PC-9 (cell line): ENCODE measurements at regions of chr3 and their contacts with region 1.

Region 1: GRCh38 chr3:78712941-78713340 is 1054.9 kb downstream of the ROBO1 start:
- DNase-seq: no peak
- H3K4me3 ChIP-seq: no peak overlapping the region
- H3K27ac ChIP-seq: no peak overlapping the region
- H3K4me1 ChIP-seq: no peaks in the 10 kb centered on the region
- H3K27me3 ChIP-seq: no peaks in the 10 kb centered on the region
- CTCF ChIP-seq: no peak

Region 2: DNA sequence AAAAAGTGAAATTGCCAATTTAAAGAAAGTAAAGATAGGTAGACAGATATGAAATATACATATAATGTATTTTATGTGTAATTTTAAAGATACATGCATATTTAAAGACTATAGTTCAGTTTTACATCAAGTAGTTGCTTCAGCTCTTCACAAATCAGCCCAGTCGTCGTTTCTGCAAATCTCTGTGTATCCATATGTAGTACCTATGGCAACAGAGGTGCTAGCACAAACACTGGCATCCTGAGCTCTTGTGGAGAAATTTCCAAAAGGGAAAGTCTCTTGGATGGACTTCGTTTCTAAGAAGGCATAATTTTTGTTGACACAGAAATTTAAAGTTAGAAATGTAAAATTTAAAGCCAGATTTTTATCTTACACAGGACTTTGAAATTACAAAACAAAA is 229.9 kb before region 1 on chr3:
- CTCF ChIA-PET with region 1: no interaction called
- POLR2A ChIA-PET with region 1: no interaction called
- intact Hi-C with region 1: no loop called
- DNase-seq: no peak
- H3K4me3 ChIP-seq: no peak overlapping the region
- H3K27ac ChIP-seq: no peak overlapping the region
- H3K4me1 ChIP-seq: no peaks in the 10 kb centered on the region
- H3K27me3 ChIP-seq: no peaks in the 10 kb centered on the region
- CTCF ChIP-seq: no peak

Region 3: GRCh38 chr3:78724859-78725258 is 11.9 kb after region 1 on chr3:
- CTCF ChIA-PET with region 1: interaction called, 11 read pairs
- POLR2A ChIA-PET with region 1: no interaction called
- intact Hi-C with region 1: no loop called
- DNase-seq: no peak
- H3K4me3 ChIP-seq: no peak overlapping the region
- H3K27ac ChIP-seq: no peak overlapping the region
- H3K4me1 ChIP-seq: peaks cover 15% of the 10 kb centered on the region
- H3K27me3 ChIP-seq: no peaks in the 10 kb centered on the region
- CTCF ChIP-seq: no peak

Region 4: DNA sequence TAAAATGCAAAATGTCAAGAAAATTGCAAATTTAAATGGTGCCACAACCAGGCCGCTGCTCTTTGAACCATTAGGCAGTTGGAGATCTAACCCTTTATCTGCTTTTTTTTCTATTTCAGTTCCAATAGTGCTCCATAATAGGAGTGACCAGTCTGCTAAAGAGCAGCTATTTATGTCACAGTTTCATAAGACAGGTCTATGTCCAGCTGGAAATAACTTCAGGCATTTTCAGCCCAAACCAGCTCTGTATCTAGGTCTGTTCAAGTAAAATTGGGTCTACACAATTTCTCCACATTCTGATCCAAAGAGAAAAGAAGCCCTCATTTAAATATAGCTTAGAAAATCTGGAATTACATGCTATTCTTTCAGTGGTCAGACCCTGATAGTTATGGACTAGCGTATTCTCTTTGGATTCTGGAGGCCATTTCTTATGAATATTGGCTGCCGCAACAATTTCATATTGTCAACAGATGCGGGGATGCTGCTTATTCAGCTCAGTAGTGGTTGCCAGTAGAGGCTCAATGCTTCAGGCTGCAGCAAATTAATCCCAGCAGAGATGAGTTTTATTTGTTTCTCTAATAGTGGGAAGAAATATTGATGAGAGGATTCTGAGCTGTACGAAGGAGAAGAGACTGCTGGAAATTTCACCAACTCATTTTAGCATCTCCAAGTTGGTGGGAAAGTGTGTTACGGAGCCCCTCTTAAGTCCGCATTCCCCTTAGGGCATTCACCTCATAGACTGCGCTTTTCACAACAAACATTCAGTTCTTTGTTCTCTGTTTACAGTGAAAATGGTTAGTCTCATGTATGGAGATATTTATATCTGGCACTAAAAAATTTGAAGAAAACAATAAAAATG is 167.9 kb after region 1 on chr3:
- CTCF ChIA-PET with region 1: no interaction called
- POLR2A ChIA-PET with region 1: no interaction called
- intact Hi-C with region 1: no loop called
- DNase-seq: no peak
- H3K4me3 ChIP-seq: no peak overlapping the region
- H3K27ac ChIP-seq: no peak overlapping the region
- H3K4me1 ChIP-seq: no peaks in the 10 kb centered on the region
- H3K27me3 ChIP-seq: no peaks in the 10 kb centered on the region
- CTCF ChIP-seq: no peak

Region 5: GRCh38 chr3:80213086-80213485 is 1500.1 kb after region 1 on chr3:
- CTCF ChIA-PET with region 1: no interaction called
- POLR2A ChIA-PET with region 1: no interaction called
- intact Hi-C with region 1: no loop called
- DNase-seq: no peak
- H3K4me3 ChIP-seq: no peak overlapping the region
- H3K27ac ChIP-seq: no peak overlapping the region
- H3K4me1 ChIP-seq: no peaks in the 10 kb centered on the region
- H3K27me3 ChIP-seq: no peaks in the 10 kb centered on the region
- CTCF ChIP-seq: no peak